CD8-positive, alpha-beta memory T cell (primary cell): ENCODE measurements at regions of chr12 and their contacts with region 1.

Region 1: GRCh38 chr12:1993871-1994371 is 10.3 kb downstream of the DCP1B start:
- DNase-seq: peak in 3 of 5 donors; percentile 14 to 59 (median 41)
- H3K4me3 ChIP-seq: no peak overlapping the region
- H3K4me3 Mint-ChIP-seq: peak overlapping the region in 6 of 7 donors; percentile 44 to 67 (median 58)
- H3K27ac ChIP-seq: peak overlapping the region; percentile 29
- H3K27ac Mint-ChIP-seq: peak overlapping the region; percentile 86 to 95 (median 91)
- H3K4me1 ChIP-seq: peaks cover 15% of the 10 kb centered on the region
- H3K4me1 Mint-ChIP-seq: peaks cover 49 to 64% (median 59%) of the 10 kb centered on the region in 3 donors
- H3K27me3 ChIP-seq: no peaks in the 10 kb centered on the region
- H3K27me3 Mint-ChIP-seq: no peaks in the 10 kb centered on the region

Region 2: GRCh38 chr12:2004113-2004929 is 10.4 kb after region 1 on chr12 and contains the start of gene DCP1B:
- CTCF ChIA-PET with region 1: interaction called, 10 read pairs
- POLR2A ChIA-PET with region 1: interaction called, 11 read pairs
- DNase-seq: peak; percentile 89 to 96 (median 92)
- H3K4me3 ChIP-seq: peak within 1 kb of the TSS; percentile 90
- H3K4me3 Mint-ChIP-seq: peak within 1 kb of the TSS; percentile 93 to 100 (median 98)
- H3K27ac ChIP-seq: peak within 1 kb of the TSS; percentile 84
- H3K27ac Mint-ChIP-seq: peak within 1 kb of the TSS; percentile 87 to 100 (median 98)
- H3K4me1 ChIP-seq: peaks cover 20% of the 10 kb centered on the region
- H3K4me1 Mint-ChIP-seq: peaks cover 35 to 47% (median 44%) of the 10 kb centered on the region in 3 donors
- H3K27me3 ChIP-seq: no peaks in the 10 kb centered on the region
- H3K27me3 Mint-ChIP-seq: peaks cover 0 to 1% of the 10 kb centered on the region in 2 donors
- total RNA-seq, gene DCP1B: 13.9 to 16.7 TPM